HCT116 (cell line): ENCODE measurements at regions of chr1 and their contacts with region 1.

Region 1: GRCh38 chr1:65958561-65959350 is 166.1 kb downstream of the PDE4B start:
- DNase-seq: peak; percentile 44
- ATAC-seq: peak; percentile 91
- H3K4me3 ChIP-seq: no peak overlapping the region
- H3K27ac ChIP-seq: no peak overlapping the region
- H3K4me1 ChIP-seq: peaks cover 4 to 10% of the 10 kb centered on the region in 2 experiments; a peak in 2 of 4 replicates
- H3K27me3 ChIP-seq: no peaks in the 10 kb centered on the region
- CTCF ChIP-seq: peak; percentile 41 to 97 (median 71); a peak in 5 of 6 replicates
- POLR2A ChIP-seq: no peak
- RAD21 ChIP-seq: peak; percentile 95

Region 2: GRCh38 chr1:65235867-65236805 is 722.6 kb before region 1 on chr1:
- CTCF ChIA-PET with region 1: no interaction called
- POLR2A ChIA-PET with region 1: no interaction called
- RAD21 ChIA-PET with region 1: no interaction called
- intact Hi-C with region 1: loop called (anchors 5 kb)
- DNase-seq: peak; percentile 41
- ATAC-seq: no peak
- H3K4me3 ChIP-seq: no peak overlapping the region
- H3K27ac ChIP-seq: no peak overlapping the region
- H3K4me1 ChIP-seq: no peaks in the 10 kb centered on the region
- H3K27me3 ChIP-seq: no peaks in the 10 kb centered on the region
- CTCF ChIP-seq: peak; percentile 50 to 72 (median 67); a peak in 5 of 6 replicates
- POLR2A ChIP-seq: no peak
- RAD21 ChIP-seq: peak; percentile 74

Region 3: DNA sequence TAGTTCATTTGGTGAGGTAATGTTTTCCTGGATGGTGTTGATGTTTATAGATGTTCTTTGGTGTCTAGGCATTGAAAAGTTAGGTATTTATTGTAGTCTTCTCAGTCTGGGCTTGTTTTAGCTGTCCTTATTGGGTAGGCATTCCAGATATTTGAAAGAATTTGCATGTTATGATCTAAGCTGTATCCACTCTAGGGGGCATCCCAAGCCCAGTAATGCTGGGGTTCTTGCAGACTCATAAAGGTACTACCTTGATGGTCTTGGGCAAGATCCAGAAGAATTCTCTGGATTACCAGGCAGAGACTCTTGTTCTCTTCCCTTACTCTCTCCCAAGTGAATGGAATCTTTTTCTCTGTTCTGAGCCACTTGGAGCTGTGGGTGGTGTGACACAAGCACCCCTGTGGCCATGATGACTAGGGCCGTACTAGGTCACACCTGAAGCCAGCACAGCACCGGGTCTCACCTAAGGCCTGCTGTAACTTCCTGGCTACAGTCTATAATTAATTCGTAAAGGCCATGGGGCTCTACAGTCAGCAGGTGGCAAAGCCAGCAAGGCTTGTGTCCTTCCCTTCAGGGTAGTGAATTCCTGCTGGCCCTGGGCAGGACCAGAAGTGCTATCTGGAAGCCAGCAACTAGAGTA is 240.8 kb before region 1 on chr1:
- CTCF ChIA-PET with region 1: interaction called, 4 read pairs
- POLR2A ChIA-PET with region 1: no interaction called
- RAD21 ChIA-PET with region 1: no interaction called
- intact Hi-C with region 1: loop called (anchors 5 kb)
- DNase-seq: peak; percentile 24
- ATAC-seq: peak; percentile 76
- H3K4me3 ChIP-seq: no peak overlapping the region
- H3K27ac ChIP-seq: no peak overlapping the region
- H3K4me1 ChIP-seq: no peaks in the 10 kb centered on the region
- H3K27me3 ChIP-seq: no peaks in the 10 kb centered on the region
- CTCF ChIP-seq: peak; percentile 8 to 46 (median 39); a peak in 3 of 6 replicates
- POLR2A ChIP-seq: no peak
- RAD21 ChIP-seq: peak; percentile 73

Region 4: GRCh38 chr1:66000033-66000637 is 41.4 kb after region 1 on chr1:
- CTCF ChIA-PET with region 1: no interaction called
- POLR2A ChIA-PET with region 1: no interaction called
- RAD21 ChIA-PET with region 1: no interaction called
- intact Hi-C with region 1: no loop called
- DNase-seq: no peak
- ATAC-seq: no peak
- H3K4me3 ChIP-seq: no peak overlapping the region
- H3K27ac ChIP-seq: no peak overlapping the region
- H3K4me1 ChIP-seq: no peaks in the 10 kb centered on the region
- H3K27me3 ChIP-seq: no peaks in the 10 kb centered on the region
- CTCF ChIP-seq: no peak
- POLR2A ChIP-seq: no peak
- RAD21 ChIP-seq: no peak

Region 5: DNA sequence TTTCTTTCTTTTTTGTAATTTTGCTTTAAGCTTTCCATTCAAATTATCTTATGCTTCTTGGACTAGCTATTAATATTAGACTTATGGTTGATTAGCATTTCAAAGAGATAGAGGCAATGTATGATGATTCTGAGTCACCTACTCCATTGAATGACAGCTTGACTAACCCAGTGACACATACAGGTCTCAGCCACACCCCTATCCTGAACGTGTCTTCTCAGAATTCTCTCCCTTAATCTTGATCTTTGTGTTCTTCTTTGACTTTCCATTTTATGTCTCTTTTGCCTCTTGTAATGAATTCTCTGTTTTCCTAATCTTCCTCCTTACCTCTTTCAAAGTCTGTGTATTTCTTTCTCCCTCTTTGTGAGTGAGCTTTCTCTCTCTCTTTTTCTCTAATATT is 75.0 kb after region 1 on chr1:
- CTCF ChIA-PET with region 1: no interaction called
- POLR2A ChIA-PET with region 1: no interaction called
- RAD21 ChIA-PET with region 1: no interaction called
- intact Hi-C with region 1: no loop called
- DNase-seq: no peak
- ATAC-seq: no peak
- H3K4me3 ChIP-seq: no peak overlapping the region
- H3K27ac ChIP-seq: no peak overlapping the region
- H3K4me1 ChIP-seq: no peaks in the 10 kb centered on the region
- H3K27me3 ChIP-seq: no peaks in the 10 kb centered on the region
- CTCF ChIP-seq: no peak
- POLR2A ChIP-seq: no peak
- RAD21 ChIP-seq: no peak

Region 6: GRCh38 chr1:66069976-66070876 is 111.5 kb after region 1 on chr1:
- CTCF ChIA-PET with region 1: no interaction called
- POLR2A ChIA-PET with region 1: no interaction called
- RAD21 ChIA-PET with region 1: no interaction called
- intact Hi-C with region 1: no loop called
- DNase-seq: no peak
- ATAC-seq: no peak
- H3K4me3 ChIP-seq: no peak overlapping the region
- H3K27ac ChIP-seq: no peak overlapping the region
- H3K4me1 ChIP-seq: no peaks in the 10 kb centered on the region
- H3K27me3 ChIP-seq: no peaks in the 10 kb centered on the region
- CTCF ChIP-seq: no peak
- POLR2A ChIP-seq: no peak
- RAD21 ChIP-seq: no peak

Region 7: GRCh38 chr1:66446261-66447001 is 487.7 kb after region 1 on chr1:
- CTCF ChIA-PET with region 1: interaction called, 9 read pairs
- POLR2A ChIA-PET with region 1: no interaction called
- RAD21 ChIA-PET with region 1: no interaction called
- intact Hi-C with region 1: loop called (anchors 1 kb)
- DNase-seq: peak; percentile 74
- ATAC-seq: peak; percentile 76
- H3K4me3 ChIP-seq: no peak overlapping the region
- H3K27ac ChIP-seq: no peak overlapping the region
- H3K4me1 ChIP-seq: peaks cover 3 to 18% of the 10 kb centered on the region in 2 experiments; a peak in 2 of 4 replicates
- H3K27me3 ChIP-seq: no peaks in the 10 kb centered on the region
- CTCF ChIP-seq: peak; percentile 61 to 94 (median 80)
- POLR2A ChIP-seq: no peak
- RAD21 ChIP-seq: peak; percentile 84